ENCODE measurements at regions of chr4 and their contacts with region 1.

Region 1: DNA sequence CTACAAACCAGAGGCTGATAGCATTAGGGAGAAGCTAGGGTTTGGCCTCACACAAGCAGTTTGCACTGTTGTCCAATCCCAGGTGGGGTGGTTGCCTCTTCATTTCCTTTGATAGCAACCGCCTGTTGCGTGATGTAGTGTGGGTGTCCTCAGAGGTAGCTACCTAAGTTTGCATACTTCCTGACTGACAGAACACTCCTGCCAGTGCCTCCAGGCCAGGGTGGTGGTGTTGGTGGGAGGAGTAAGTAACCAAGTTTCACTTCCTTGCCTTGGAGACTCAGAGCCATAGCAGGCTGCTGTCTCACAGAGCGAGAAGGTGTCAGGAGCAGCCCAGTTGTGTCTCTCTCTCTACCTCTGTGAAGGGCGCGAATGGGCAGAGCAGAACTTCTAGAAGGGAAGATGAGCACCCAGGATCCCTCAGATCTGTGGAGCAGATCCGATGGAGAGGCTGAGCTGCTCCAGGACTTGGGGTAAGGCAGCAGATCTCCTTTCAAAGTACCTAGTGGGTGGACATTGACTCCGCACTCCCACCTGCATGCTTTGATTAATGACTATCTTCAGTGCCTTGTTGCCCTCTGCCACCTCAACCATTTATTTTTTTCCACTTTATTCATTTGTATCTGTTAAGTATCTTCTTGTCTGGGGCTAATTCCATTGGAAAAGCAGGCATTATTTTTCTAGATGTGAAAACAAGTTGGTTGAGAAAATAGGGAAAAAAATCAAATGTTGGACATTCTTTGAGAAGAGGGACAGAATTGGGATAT is at the start of gene DAPP1:
- DNase-seq: peak; percentile 88
- ATAC-seq: peak; percentile 93
- H3K4me3 Mint-ChIP-seq: peak within 1 kb of the TSS; percentile 78
- H3K27ac Mint-ChIP-seq: peak within 1 kb of the TSS; percentile 96
- H3K4me1 Mint-ChIP-seq: peaks cover 77% of the 10 kb centered on the region
- H3K27me3 Mint-ChIP-seq: no peaks in the 10 kb centered on the region
- total RNA-seq, gene DAPP1: 24.7 to 25.9 TPM

Region 2: GRCh38 chr4:99088481-99089365 is 728.0 kb before region 1 on chr4 and contains the start of gene ADH5:
- CTCF ChIA-PET with region 1: no interaction called
- POLR2A ChIA-PET with region 1: no interaction called
- intact Hi-C with region 1: loop called in 1 of 2 experiments (anchors 10 kb)
- DNase-seq: peak; percentile 96
- ATAC-seq: peak; percentile 97
- H3K4me3 Mint-ChIP-seq: peak within 1 kb of the TSS; percentile 98
- H3K27ac Mint-ChIP-seq: peak within 1 kb of the TSS; percentile 99
- H3K4me1 Mint-ChIP-seq: peaks cover 42% of the 10 kb centered on the region
- H3K27me3 Mint-ChIP-seq: no peaks in the 10 kb centered on the region
- total RNA-seq, gene ADH5: 81.3 to 119 TPM

Region 3: DNA sequence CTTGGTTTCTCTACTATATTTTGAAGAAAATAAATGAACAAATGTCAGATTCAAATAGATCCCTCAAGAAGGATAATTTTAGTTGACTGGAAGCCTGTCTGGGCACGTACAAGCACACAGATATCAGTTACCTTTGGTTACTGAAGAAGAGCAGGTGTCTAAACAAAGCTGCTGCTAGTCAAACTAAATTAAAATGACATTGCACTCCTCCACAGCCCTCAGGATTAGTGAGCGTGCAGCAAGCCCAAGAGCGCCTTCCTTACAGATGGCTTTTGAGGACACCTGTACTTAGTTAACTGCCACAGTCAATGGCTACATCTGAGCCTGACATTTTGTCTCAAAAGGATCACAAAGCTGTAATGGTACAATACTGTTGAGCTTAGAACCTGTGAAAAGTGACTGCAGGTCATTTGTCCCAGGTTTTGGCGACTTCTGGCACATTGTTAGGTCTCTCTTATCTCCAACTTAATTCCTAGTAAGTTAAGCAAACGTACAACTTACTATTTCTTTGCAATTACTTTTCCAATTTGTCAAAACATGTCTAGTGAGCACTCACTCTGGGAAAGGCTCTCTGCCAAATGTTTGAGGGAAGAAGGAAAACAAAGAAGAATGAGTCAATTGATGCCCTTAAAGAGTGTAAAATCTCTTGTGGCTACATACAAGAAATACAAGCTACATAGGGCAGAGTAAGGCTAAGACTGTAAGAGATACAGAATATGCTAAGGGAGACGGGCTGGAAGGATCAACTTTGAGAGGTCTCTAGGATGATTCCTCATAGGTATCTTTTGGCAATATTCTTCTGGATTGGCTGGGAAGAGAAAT is 25.7 kb before region 1 on chr4:
- CTCF ChIA-PET with region 1: no interaction called
- POLR2A ChIA-PET with region 1: no interaction called
- intact Hi-C with region 1: no loop called
- DNase-seq: no peak
- ATAC-seq: no peak
- H3K4me3 Mint-ChIP-seq: no peak overlapping the region
- H3K27ac Mint-ChIP-seq: no peak overlapping the region
- H3K4me1 Mint-ChIP-seq: no peaks in the 10 kb centered on the region
- H3K27me3 Mint-ChIP-seq: peaks cover 42% of the 10 kb centered on the region

Region 4: GRCh38 chr4:99847362-99847976 is 30.7 kb after region 1 on chr4:
- CTCF ChIA-PET with region 1: interaction called, 9 read pairs
- POLR2A ChIA-PET with region 1: no interaction called
- intact Hi-C with region 1: loop called (anchors 1 kb)
- DNase-seq: peak; percentile 46
- ATAC-seq: peak; percentile 37
- H3K4me3 Mint-ChIP-seq: peak overlapping the region; percentile 42
- H3K27ac Mint-ChIP-seq: peak overlapping the region; percentile 90
- H3K4me1 Mint-ChIP-seq: peaks cover 75% of the 10 kb centered on the region
- H3K27me3 Mint-ChIP-seq: no peaks in the 10 kb centered on the region

Region 5: DNA sequence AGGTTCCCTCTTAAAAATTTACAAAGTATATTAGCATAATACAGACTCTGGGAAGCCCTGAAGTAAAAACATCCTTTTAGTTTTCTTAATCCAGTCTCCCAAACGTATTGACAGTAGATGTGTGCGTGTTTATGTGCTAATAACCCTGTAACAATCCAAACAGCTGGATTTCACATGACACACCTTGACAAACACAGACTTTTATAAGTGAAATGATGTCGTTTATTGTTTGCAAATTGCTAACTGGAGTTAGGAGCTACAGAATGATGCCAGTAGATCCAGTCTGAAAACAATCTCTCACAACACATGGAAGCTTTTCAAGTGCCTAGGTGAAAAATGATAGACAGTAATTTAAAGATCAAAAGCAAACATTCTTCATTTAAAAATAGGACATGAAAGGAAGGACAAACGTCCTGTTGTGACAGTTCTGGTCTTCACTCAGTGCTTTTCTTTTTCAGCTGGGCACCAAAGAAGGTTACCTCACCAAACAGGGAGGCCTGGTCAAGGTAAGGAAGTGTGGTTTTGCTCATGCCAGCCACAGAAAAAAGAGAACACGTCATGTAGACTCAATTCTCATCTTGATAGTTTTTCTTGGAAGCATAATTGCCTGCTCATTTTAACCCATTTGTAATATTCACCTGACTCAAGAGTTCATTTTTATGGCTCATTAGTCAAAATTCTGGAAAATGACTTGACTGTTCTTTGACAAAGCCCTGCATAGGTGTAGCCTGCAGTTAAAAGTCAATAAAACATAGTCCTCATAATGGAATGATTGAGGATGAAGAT is 44.6 kb after region 1 on chr4:
- CTCF ChIA-PET with region 1: interaction called, 19 read pairs
- POLR2A ChIA-PET with region 1: no interaction called
- intact Hi-C with region 1: loop called in 1 of 2 experiments (anchors 1 kb)
- DNase-seq: peak; percentile 43
- ATAC-seq: peak; percentile 84
- H3K4me3 Mint-ChIP-seq: no peak overlapping the region
- H3K27ac Mint-ChIP-seq: peak overlapping the region; percentile 55
- H3K4me1 Mint-ChIP-seq: peaks cover 34% of the 10 kb centered on the region
- H3K27me3 Mint-ChIP-seq: no peaks in the 10 kb centered on the region

Region 6: DNA sequence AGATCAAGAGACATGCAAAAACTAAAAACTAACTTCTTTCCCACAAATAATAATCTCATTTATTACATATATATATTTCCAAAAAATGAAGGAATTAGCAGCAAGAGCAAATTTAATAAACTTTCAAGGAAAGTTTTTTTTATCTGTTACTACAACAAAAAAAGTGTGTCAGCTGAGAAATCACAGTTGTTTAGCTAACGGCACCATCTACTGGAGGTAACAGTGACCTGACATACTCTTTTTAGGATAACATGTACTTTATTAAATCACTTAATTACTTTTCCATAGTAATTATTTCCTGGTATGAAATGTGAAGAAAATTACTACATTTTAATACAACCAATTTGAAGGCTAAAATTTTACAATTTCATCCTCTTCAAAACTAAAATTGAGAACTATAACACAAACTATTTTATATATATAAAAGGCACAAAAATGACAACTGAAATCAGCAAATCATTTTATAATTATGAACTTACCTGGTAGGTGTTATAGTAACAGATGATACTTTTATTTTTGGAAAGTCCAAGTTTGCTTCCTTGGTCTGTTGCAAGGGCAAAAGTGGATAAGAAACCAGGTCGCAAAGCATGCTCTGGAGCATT is 68.4 kb after region 1 on chr4:
- CTCF ChIA-PET with region 1: interaction called, 56 read pairs
- POLR2A ChIA-PET with region 1: interaction called, 6 read pairs
- intact Hi-C with region 1: loop called (anchors 1 kb)
- DNase-seq: peak; percentile 40
- ATAC-seq: no peak
- H3K4me3 Mint-ChIP-seq: no peak overlapping the region
- H3K27ac Mint-ChIP-seq: no peak overlapping the region
- H3K4me1 Mint-ChIP-seq: peaks cover 10% of the 10 kb centered on the region
- H3K27me3 Mint-ChIP-seq: no peaks in the 10 kb centered on the region

Region 7: DNA sequence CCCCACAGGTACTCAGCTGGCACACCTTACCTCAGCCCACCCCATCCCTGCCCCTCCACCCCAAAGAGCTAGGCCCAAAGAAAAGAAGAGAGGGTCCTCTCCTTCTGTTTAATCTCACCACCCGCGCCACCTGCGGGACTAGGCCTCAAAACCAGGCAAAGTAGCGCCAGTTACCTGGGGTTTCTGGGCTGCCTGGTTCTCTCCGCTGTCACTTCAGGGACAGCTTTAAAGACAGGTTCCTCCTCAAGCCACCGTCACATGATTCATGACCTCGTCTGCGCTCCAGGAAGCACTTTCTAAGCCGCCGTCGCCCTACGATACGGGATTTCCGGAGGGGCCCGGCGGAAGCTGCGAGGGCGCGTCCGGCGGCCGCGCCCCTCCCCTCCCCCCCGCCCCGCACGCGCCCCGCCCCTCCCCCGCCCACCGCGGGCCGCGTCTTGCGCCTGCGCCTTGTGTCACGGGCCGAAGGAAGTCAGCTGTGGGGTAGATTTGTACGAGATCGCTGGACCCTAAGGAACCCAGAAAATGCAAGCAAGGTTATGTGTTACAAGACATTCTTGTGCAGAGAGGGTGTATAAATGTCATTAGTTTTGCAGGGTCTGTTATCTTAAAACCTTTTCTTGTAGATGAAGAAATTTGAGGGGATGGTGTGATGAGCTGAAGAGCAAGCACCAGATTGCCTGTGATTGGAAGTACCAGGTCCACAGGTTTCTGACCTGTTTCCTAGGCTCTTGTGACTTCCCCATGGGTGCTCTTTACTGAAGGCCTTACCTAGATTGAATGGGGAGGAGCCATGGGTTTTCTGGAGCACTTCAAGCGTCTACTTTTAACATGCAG is 77.7 kb after region 1 on chr4 and contains the start of gene LAMTOR3:
- CTCF ChIA-PET with region 1: interaction called, 9 read pairs
- POLR2A ChIA-PET with region 1: no interaction called
- intact Hi-C with region 1: loop called in 1 of 2 experiments (anchors 1 kb)
- DNase-seq: peak; percentile 94
- ATAC-seq: peak; percentile 100
- H3K4me3 Mint-ChIP-seq: peak within 1 kb of the TSS; percentile 96
- H3K27ac Mint-ChIP-seq: peak within 1 kb of the TSS; percentile 94
- H3K4me1 Mint-ChIP-seq: peaks cover 32% of the 10 kb centered on the region
- H3K27me3 Mint-ChIP-seq: no peaks in the 10 kb centered on the region
- total RNA-seq, gene LAMTOR3: 28.5 to 30.4 TPM

Region 8: DNA sequence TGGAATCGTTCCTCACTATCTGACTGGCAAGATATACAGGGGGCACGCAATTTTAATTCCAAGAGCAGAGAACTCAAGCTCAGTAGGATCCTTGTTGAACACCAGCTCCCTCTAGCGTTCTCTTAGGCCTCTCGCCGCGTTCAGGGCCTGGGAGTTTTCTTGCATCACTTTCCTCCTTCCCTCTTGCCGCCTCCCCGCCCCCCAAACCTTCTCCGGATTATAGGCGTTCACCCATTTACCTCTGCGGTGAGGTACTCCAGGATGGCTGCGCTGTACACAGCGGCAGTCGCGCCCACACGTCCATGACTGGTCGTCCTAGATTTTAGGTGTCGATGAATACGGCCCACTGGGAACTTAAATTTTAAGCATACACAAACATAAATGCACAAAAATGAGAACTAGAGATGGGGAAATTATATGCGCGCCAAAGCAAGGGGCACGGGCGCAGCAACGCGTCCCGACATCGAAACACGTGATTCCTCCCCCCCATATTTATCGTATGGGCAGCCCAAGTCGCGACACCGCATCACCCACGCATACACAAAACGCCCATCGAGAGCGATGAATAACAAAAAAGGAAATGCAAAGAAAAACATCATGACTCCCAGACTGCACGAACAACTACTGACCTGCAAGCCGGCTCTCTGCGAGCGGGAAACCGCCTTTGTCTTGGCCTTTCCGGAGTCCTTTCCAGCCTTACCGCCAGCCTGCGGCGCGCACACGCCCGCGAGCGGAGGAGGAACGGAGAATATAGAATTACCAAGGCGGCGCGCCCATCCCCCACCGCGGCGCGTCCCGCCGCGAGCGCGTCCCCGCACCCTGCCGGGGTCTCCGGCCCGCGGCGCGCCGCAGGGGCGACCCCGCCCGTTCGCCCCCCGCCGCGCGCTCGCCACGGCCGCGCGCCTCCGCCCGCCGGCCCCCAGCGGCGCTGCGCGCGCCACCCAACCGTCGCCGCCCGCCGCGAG is 132.6 kb after region 1 on chr4:
- CTCF ChIA-PET with region 1: interaction called, 16 read pairs
- POLR2A ChIA-PET with region 1: interaction called, 3 read pairs
- intact Hi-C with region 1: loop called (anchors 1 to 2 kb)
- DNase-seq: peak; percentile 96
- ATAC-seq: peak; percentile 52
- H3K4me3 Mint-ChIP-seq: no peak overlapping the region
- H3K27ac Mint-ChIP-seq: no peak overlapping the region
- H3K4me1 Mint-ChIP-seq: peaks cover 33% of the 10 kb centered on the region
- H3K27me3 Mint-ChIP-seq: no peaks in the 10 kb centered on the region

Region 9: GRCh38 chr4:100738196-100739170 is 921.8 kb after region 1 on chr4:
- CTCF ChIA-PET with region 1: no interaction called
- POLR2A ChIA-PET with region 1: no interaction called
- intact Hi-C with region 1: no loop called
- DNase-seq: no peak
- ATAC-seq: no peak
- H3K4me3 Mint-ChIP-seq: no peak overlapping the region
- H3K27ac Mint-ChIP-seq: no peak overlapping the region
- H3K4me1 Mint-ChIP-seq: no peaks in the 10 kb centered on the region
- H3K27me3 Mint-ChIP-seq: no peaks in the 10 kb centered on the region

Measured in activated CD4-positive, alpha-beta T cell treated with anti-CD3 and anti-CD28 coated beads for 36 hours (primary cell).